Cardiac septum (tissue), 1 donor: ENCODE measurements at regions of chr5 and their contacts with region 1.

Region 1: DNA sequence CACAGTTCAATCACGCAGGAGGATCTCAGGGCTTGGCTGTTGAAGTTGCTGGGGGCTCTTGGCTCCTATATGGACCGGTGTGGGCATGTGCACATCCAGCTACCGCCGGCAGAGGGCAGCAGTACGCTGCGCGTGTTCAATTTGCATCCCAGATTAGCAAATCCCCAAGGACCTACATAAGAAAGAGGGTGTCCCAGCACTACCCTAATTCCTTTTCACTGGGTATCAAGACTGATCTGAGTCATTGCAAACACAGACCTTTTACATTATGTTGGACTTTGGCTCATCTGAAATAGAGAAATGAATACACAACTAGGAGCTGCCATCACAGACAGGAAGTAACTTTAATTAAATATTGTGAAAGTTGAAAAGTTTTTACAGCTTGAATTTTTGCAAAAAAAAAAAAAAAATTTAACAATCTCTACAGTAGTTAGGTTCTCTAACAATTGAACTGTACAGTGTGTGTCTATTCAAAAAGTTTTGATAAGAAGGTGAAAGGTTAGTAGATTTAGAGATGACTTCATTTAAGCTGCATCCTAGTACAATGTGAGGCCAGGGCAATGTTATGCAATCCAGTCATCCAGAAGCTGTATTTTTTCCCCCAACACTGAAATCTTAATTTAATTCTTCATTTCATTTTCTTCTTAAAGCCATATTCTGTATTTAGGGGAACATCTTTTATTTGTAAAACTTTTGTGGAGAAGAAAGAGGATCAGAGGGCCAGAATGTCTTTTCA is 404.0 kb downstream of the EBF1 start:
- DNase-seq: peak; percentile 89

Region 2: DNA sequence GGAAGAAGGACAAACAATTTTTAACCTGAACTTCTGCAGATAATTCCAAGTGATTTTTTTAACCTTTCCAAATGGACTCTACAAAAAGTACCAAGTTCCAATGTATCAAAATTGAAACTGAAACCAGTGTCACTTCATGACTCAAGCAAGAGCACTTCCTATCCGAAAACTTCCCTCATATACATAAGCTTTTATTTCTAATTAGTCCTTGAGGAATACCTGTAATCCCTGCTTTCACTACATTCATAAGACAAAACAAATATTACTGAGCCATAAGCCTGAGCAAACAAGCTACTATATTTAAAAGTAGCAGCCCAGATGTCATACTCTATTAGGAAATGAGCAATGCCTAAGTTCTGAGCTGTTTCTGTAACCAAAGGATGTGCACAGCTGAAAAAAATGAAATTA is 179.5 kb after region 1 on chr5:
- intact Hi-C with region 1: loop called (anchors 10 kb)
- DNase-seq: no peak